Calu3 (cell line): ENCODE measurements at regions of chr14 and their contacts with region 1.

Region 1: DNA sequence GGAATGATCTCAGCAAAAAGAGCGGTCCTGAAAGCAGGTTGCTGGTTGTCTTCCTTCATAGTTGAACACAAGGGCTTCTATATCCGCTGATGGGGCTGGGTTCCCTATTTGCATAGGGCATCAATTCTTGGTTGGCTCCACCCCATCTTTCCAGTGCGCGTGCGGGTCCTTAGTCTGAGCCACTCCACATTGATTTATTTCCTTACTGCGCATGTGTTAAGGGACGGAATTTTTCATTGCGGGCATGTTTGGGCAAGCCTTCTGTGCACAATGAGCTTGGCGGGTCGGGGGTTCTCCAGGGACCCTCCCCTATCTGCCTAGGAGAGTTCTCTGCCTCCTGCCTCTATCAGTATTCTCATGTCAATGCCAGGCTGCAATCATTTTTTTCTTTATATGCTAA is 21.2 kb upstream of the DLGAP5 start:
- DNase-seq: peak; percentile 35
- H3K4me3 Mint-ChIP-seq: no peak overlapping the region
- H3K27ac Mint-ChIP-seq: no peak overlapping the region
- H3K4me1 Mint-ChIP-seq: no peaks in the 10 kb centered on the region
- H3K27me3 Mint-ChIP-seq: no peaks in the 10 kb centered on the region
- CTCF ChIP-seq: no peak

Region 2: GRCh38 chr14:55540847-55541766 is 328.5 kb after region 1 on chr14:
- CTCF ChIA-PET with region 1: no interaction called
- intact Hi-C with region 1: no loop called
- DNase-seq: no peak
- H3K4me3 Mint-ChIP-seq: peak overlapping the region; percentile 26
- H3K27ac Mint-ChIP-seq: peak overlapping the region; percentile 38
- H3K4me1 Mint-ChIP-seq: peaks cover 36% of the 10 kb centered on the region
- H3K27me3 Mint-ChIP-seq: no peaks in the 10 kb centered on the region
- CTCF ChIP-seq: no peak

Region 3: GRCh38 chr14:56482310-56482911 is 1269.8 kb after region 1 on chr14:
- CTCF ChIA-PET with region 1: no interaction called
- intact Hi-C with region 1: loop called (anchors 5 kb)
- DNase-seq: peak; percentile 37
- H3K4me3 Mint-ChIP-seq: no peak overlapping the region
- H3K27ac Mint-ChIP-seq: no peak overlapping the region
- H3K4me1 Mint-ChIP-seq: no peaks in the 10 kb centered on the region
- H3K27me3 Mint-ChIP-seq: no peaks in the 10 kb centered on the region
- CTCF ChIP-seq: peak; percentile 15